ENCODE measurements at regions of chr7 and their contacts with region 1.

Region 1: GRCh38 chr7:16078076-16078952 is 343.0 kb downstream of the CRPPA start:
- H3K4me3 ChIP-seq: no peak overlapping the region
- H3K27ac ChIP-seq: no peak overlapping the region
- H3K4me1 ChIP-seq: no peaks in the 10 kb centered on the region
- CTCF ChIP-seq: peak; percentile 25; the same call in 1 of the 2 replicates

Region 2: GRCh38 chr7:16098585-16099179 is 20.4 kb after region 1 on chr7:
- CTCF ChIA-PET with region 1: interaction called, 50 read pairs
- POLR2A ChIA-PET with region 1: no interaction called
- H3K4me3 ChIP-seq: no peak overlapping the region
- H3K27ac ChIP-seq: no peak overlapping the region
- H3K4me1 ChIP-seq: no peaks in the 10 kb centered on the region
- CTCF ChIP-seq: no peak

Region 3: GRCh38 chr7:16114633-16115032 is 36.3 kb after region 1 on chr7:
- CTCF ChIA-PET with region 1: no interaction called
- POLR2A ChIA-PET with region 1: no interaction called
- H3K4me3 ChIP-seq: no peak overlapping the region
- H3K27ac ChIP-seq: no peak overlapping the region
- H3K4me1 ChIP-seq: no peaks in the 10 kb centered on the region
- CTCF ChIP-seq: no peak

Measured in HEK293 (cell line).